ENCODE measurements at regions of chr14 and their contacts with region 1.

Region 1: DNA sequence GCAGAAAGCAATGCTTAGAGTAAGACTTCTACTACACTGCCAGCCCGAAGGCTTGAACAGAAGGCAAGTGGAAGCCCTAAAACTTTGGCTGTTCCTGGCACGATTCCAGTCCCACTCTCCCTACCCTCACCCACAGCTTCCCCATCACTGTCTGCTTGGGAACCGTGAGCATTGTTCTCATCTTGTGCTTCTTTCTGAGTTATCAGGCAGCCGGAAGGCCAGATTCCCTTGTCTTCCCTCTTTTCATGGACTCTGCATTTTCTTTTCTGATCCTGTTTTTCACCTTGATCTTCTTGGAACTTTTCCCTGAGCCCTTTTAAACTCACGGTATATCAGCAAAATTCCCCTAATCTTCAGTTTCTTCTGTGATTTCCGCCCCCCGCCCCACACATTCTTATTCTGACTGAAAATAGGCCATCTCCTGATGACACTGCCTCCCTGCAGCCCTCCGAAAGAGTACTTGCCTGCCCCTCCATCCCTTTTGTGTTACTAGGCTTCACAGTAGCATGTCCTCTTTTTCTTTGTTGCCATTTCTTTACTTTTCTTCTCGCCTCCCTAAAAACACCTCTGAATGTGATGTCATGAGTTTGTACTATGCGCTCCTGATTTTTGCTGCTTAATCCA is 29.9 kb downstream of the RCOR1 start:
- DNase-seq: no peak
- CTCF ChIP-seq: no peak

Region 2: DNA sequence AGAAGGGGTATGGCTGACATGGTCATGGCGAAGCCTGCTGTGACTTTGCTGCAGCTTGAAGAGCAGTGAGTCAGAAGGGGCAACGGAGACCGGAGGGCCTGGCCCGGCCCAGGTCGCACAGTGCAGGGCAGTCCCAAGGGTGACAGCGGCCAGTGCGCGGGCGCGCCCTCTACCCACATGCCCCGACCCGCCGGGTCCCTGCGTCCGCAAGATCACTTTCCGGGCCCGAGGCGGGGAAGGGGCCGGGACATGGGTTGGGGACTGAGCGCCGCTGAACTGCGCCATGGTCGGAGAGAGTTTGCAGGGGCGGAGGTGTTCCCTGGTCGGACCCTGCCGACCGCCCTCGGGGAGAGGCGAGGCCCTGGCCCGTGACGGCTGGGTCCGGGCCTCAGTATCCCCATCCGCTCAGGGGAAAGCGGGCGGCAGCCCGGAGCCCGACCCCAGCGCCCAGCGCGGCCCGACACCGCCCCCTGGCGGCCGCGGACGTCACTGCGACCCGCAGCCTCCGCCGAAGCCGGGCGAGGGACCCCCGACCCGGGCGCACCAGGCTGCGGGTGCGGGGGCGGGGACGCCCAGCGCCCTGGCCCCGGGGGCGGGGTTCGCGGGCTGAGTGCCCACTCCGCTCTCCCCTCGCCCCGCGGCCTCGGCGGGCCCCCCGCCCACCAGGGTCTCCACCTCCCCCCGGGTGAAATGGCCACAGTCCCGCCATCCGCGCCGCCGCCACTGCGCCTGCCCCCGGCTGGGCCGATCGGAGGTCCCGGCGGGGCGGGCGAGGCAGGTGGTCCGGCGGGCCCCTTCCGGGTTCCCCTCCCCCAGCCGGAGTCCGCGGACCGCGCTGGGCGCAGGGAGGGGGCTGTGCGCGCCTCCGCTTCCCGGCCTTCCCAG is 105.6 kb before region 1 on chr14:
- CTCF ChIA-PET with region 1: no interaction called
- POLR2A ChIA-PET with region 1: no interaction called
- DNase-seq: peak; percentile 84
- CTCF ChIP-seq: peak; percentile 83

Region 3: GRCh38 chr14:102608064-102608446 is 14.3 kb before region 1 on chr14:
- CTCF ChIA-PET with region 1: interaction called, 51 read pairs
- POLR2A ChIA-PET with region 1: no interaction called
- DNase-seq: peak; percentile 48
- CTCF ChIP-seq: no peak

Region 4: DNA sequence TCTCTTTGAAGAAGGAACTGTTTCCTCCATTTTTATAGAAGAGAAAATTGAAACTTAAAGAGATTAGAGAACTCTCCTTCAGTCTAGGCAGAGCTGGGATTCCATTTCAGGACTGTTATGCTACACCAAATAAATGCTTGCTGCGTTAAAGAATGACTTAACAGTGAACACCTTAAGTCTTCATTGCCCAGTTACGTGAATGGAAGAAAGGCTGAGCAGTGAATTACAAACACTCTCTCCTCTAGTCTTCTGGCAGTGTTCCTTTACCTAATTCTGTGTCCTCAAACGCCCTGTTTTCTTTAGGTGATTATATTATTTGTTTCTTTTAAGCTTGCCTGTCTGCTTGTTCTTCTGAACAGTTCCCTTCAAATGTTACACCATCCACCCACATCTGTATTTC is 29.8 kb after region 1 on chr14:
- CTCF ChIA-PET with region 1: no interaction called
- POLR2A ChIA-PET with region 1: no interaction called
- DNase-seq: no peak
- CTCF ChIP-seq: no peak